BJ (cell line): ENCODE measurements at regions of chr3 and their contacts with region 1.

Region 1: GRCh38 chr3:16550676-16551341 is 37.3 kb upstream of the RFTN1 start:
- DNase-seq: peak; percentile 49
- H3K4me3 ChIP-seq: no peak overlapping the region
- H3K27me3 ChIP-seq: peaks cover 8% of the 10 kb centered on the region
- CTCF ChIP-seq: peak; percentile 78

Region 2: DNA sequence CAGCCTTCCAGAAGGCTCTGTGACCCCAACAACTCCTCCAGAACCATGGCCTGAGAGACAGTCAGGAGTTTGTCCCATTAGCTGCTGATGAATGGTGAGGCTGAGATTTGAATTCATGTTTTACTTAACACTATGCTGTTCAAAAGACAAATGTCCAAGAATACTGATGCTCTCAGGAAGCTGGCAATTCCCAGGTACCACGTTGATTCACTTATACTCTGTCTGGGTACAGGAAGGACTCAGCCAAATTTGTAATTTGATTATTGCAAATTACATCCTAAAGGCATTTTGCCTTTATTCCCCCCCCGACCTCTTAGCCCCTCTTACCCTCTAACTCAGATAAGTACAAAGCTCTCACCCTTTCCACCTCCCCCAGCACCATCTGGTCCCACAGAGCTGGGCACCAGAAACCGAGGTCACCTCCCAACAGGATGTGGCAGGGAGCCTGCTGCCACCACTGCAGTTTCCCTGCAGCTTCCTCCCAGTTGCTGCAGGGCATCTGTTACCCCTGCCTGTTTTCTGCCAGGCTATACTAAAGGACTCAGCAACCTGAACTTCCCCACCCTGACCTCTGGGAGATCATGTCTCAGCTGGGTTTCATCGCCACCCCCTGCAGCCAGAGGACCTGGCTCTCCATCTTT is 1089.8 kb before region 1 on chr3:
- CTCF ChIA-PET with region 1: no interaction called
- POLR2A ChIA-PET with region 1: no interaction called
- DNase-seq: no peak
- H3K4me3 ChIP-seq: no peak overlapping the region
- H3K27me3 ChIP-seq: no peaks in the 10 kb centered on the region
- CTCF ChIP-seq: no peak

Region 3: GRCh38 chr3:16264708-16265454 is 285.9 kb before region 1 on chr3 and contains the starts of genes DPH3 and OXNAD1:
- CTCF ChIA-PET with region 1: interaction called, 41 read pairs
- POLR2A ChIA-PET with region 1: no interaction called
- DNase-seq: peak; percentile 93
- H3K4me3 ChIP-seq: peak within 1 kb of the TSS; percentile 96
- H3K27me3 ChIP-seq: no peaks in the 10 kb centered on the region
- CTCF ChIP-seq: no peak
- polyA plus RNA-seq, gene DPH3: 11.4 and 18.2 TPM in 2 replicates
- polyA plus RNA-seq, gene OXNAD1: 8.9 and 11.4 TPM in 2 replicates

Region 4: DNA sequence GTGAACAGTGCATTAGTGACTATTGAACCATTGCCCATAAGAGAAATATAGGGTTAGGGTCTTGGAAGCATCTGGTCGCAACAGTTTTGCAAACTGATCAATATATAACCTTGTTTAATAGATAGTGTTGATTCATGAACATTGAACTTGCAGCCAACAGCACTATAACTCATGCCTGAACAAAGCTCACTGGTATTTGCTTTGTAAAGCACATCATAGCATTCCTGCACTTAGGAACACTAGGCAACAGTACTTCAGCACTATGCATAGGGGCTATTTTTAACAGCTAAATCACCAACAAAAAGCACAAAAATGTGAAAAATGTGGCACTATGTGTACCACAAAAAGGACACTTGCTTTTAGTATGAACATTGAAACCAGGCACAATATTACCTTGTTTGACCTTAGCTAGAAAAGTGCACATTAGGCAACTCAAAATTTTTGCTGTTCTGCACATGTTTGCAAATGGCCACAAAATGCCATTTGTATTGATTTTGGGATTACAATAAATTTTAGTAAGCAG is 217.8 kb before region 1 on chr3:
- CTCF ChIA-PET with region 1: no interaction called
- POLR2A ChIA-PET with region 1: no interaction called
- DNase-seq: peak; percentile 65
- H3K4me3 ChIP-seq: no peak overlapping the region
- H3K27me3 ChIP-seq: no peaks in the 10 kb centered on the region
- CTCF ChIP-seq: no peak

Region 5: GRCh38 chr3:16427103-16427965 is 123.5 kb before region 1 on chr3:
- CTCF ChIA-PET with region 1: no interaction called
- POLR2A ChIA-PET with region 1: no interaction called
- DNase-seq: peak; percentile 84
- H3K4me3 ChIP-seq: no peak overlapping the region
- H3K27me3 ChIP-seq: no peaks in the 10 kb centered on the region
- CTCF ChIP-seq: no peak